Posterior vena cava (tissue), 2 donors: ENCODE measurements at regions of chr13 and their contacts with region 1.

Region 1: DNA sequence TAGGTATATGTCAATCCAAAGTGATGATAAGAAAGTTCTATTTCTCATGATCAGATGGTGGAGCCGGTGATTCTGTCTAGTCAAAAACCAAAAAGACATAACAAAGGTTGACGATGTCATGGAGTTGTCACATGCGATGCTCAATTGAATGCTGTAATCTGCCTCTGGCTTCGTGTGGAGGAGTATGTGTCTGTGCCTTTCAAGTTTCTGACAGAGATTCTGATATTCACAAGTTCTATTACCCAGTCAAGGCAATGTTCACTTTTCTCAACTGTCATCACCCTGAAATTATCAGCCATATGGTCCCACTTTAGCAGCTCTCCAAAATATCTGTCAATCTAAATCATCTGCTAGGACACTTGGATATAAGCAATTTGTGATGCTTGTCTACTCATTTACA is 367.6 kb upstream of the PRR20A start:
- DNase-seq: no peak

Region 2: DNA sequence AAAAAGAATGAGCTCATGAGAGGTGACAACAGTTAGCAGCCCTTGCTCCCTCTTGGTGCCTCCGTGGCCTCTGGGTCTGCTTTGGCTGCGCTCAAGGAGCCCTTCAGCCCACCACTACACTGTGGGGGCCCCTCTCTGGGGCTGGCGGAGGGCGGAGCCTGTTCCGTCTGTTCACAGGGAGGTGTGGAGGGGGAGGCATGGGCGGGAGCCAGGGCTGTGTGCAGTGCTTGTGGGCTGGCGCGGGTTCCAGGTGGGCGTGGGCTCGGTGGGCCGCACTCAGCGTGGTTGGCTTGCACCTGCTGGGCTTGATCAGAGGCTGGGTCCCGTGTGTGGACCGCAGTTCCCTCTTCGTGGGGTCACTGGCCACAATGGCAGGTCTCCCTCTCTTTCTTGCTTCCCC is 585.8 kb before region 1 on chr13:
- intact Hi-C with region 1: loop called in 1 of 2 experiments (anchors 5 kb)
- DNase-seq: no peak

Region 3: DNA sequence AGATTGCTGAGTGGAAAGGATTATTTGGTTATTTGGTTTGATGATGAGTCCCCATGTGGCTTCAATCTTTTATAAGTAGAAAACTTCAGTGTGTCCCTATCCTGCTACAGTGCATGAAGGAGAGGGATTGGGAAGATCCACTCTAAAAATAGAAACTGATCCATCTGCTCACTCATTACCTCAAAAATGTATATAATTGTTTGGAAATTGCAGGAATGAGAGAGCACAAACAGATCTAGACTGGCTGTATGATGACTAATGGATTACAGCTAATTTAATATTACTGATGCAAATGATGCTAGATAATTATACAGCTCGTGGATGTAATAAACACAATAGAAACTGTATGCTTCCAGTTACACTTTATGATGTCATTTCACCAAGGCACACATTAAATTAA is 257.7 kb before region 1 on chr13:
- intact Hi-C with region 1: no loop called
- DNase-seq: no peak

Region 4: GRCh38 chr13:56586966-56587365 is 186.2 kb before region 1 on chr13:
- intact Hi-C with region 1: no loop called
- DNase-seq: no peak

Region 5: GRCh38 chr13:57631521-57632275 is 858.5 kb after region 1 on chr13 and contains the start of gene PCDH17:
- intact Hi-C with region 1: no loop called
- DNase-seq: no peak
- total RNA-seq, gene PCDH17: 7.3 to 10.5 TPM

Region 6: DNA sequence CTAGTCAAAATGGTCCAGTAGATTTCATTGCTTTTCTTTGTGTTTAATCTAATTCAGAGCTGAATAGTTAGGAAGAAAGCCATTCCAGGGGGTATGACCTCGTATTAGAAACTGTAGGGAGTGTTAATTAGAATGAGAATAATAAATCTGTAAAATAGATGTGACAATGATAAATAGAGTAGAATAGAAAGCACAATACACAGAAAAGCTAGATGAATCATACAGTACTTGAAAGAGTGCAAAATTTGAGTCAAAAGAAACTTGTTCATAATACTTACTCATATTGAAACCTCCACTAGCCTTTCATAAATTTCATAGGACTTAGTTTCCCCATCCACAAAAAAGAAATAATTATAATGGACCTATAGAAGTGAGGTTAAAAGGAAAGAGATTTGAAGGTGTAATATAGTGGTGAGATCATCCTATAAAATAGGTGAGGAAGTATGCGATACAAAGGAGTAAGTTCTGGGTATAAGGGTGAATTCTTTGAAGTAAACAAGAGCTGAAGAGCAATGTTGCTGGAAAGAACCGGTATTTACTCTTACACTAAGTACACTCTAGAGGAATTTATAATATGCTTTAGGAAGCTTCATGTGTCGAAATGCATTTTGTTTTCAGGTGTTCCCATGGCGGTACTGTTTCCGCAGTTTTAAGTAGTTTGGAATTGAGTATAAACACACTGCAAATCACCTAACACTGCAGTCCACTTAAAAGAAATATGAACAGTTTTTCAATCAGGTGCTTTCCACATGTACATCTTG is 880.3 kb after region 1 on chr13:
- intact Hi-C with region 1: no loop called
- DNase-seq: no peak